ENCODE measurements at regions of chr4 and their contacts with region 1.

Region 1: GRCh38 chr4:120071192-120071795 is 4.6 kb upstream of the MAD2L1 start:
- DNase-seq: peak; percentile 38
- H3K4me3 Mint-ChIP-seq: no peak overlapping the region
- H3K27ac Mint-ChIP-seq: no peak overlapping the region
- H3K4me1 Mint-ChIP-seq: peaks cover 13% of the 10 kb centered on the region
- H3K27me3 Mint-ChIP-seq: no peaks in the 10 kb centered on the region
- CTCF ChIP-seq: peak; percentile 30

Region 2: GRCh38 chr4:120156120-120156718 is 84.9 kb after region 1 on chr4:
- CTCF ChIA-PET with region 1: no interaction called
- intact Hi-C with region 1: loop called (anchors 2 kb)
- DNase-seq: peak; percentile 43
- H3K4me3 Mint-ChIP-seq: no peak overlapping the region
- H3K27ac Mint-ChIP-seq: no peak overlapping the region
- H3K4me1 Mint-ChIP-seq: no peaks in the 10 kb centered on the region
- H3K27me3 Mint-ChIP-seq: no peaks in the 10 kb centered on the region
- CTCF ChIP-seq: no peak

Region 3: GRCh38 chr4:120238277-120238973 is 167.1 kb after region 1 on chr4:
- CTCF ChIA-PET with region 1: no interaction called
- intact Hi-C with region 1: loop called (anchors 5 kb)
- DNase-seq: no peak
- H3K4me3 Mint-ChIP-seq: no peak overlapping the region
- H3K27ac Mint-ChIP-seq: no peak overlapping the region
- H3K4me1 Mint-ChIP-seq: no peaks in the 10 kb centered on the region
- H3K27me3 Mint-ChIP-seq: no peaks in the 10 kb centered on the region
- CTCF ChIP-seq: no peak

Region 4: DNA sequence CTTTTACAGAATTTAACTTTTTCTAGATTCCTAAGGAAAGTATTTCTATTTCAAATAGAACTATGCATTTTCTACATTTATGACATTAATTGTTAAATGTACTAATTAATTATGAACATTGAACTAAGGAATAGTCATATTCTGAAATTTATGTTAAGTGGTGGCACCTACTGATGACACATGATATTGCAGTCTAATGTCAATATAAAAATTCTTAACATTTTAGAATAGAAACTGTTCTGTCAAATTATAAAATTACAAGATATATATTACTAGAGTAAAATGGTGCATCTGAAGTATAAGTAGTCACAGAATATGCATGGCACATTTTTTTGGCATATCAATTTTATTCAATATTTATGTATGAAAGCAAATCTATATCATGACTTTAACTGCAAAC is 1041.2 kb after region 1 on chr4:
- CTCF ChIA-PET with region 1: no interaction called
- intact Hi-C with region 1: loop called (anchors 2 kb)
- DNase-seq: no peak
- H3K4me3 Mint-ChIP-seq: no peak overlapping the region
- H3K27ac Mint-ChIP-seq: no peak overlapping the region
- H3K4me1 Mint-ChIP-seq: no peaks in the 10 kb centered on the region
- H3K27me3 Mint-ChIP-seq: no peaks in the 10 kb centered on the region
- CTCF ChIP-seq: no peak